ENCODE measurements at regions of chr11 and their contacts with region 1.

Region 1: DNA sequence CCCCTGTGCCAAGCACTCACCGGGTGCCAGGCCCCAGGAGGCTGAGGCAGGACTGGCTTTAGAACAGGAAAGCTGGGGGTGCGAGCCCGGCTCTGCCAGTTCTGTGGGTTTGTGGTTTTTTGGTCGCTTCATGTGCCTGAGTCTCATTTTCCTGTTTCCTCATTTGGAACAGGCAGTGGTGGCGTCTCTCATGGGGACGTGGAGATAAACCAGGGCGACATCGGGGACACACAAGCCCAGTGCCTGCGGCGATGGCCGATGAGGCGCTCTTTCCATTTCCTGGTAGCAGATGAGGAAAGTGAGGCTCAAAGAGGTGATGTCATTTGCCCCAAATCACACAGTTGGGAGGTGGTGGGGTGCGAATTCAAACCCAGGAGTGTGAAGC is 20.8 kb upstream of the CHKA start:
- DNase-seq: no peak
- H3K4me3 ChIP-seq: no peak overlapping the region
- H3K27ac ChIP-seq: no peak overlapping the region
- H3K4me1 ChIP-seq: peaks cover 10% of the 10 kb centered on the region
- H3K27me3 ChIP-seq: no peaks in the 10 kb centered on the region
- CTCF ChIP-seq: no peak

Region 2: DNA sequence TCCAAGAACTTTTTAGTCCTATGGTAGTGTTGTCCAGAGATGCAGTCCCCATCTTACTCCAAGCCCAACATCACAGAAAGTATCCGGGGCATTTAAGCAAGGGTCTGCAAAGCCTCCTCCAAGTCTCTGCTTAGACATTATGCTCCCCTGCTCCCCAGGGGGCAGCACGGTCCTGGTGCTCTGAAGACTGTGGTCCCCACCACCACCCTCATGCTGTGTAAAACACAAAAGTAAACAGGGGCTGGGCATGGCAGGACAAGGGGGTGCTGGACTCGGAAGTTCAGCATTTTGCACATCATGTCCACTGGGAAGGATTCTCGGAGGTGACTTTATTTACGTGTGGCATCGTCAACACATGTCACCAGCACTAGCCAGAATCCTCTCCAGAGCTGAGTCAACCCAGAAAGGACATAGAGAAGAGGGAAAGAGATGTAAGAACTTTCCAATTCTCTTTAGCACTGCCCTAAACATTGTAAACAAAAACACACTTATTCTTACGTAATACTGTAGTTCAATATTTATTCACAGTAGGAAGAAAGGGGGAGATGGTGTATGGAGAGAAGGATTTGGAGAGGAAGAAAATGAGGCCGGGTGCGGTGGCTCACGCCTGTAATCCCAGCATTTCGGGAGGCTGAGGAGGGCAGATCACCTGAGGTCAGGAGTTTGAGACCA is 65.5 kb before region 1 on chr11:
- CTCF ChIA-PET with region 1: no interaction called
- dilution Hi-C with region 1: loop called (anchors 5 kb)
- in situ Hi-C with region 1: no loop called
- intact Hi-C with region 1: no loop called
- DNase-seq: no peak
- H3K4me3 ChIP-seq: no peak overlapping the region
- H3K27ac ChIP-seq: no peak overlapping the region
- H3K4me1 ChIP-seq: peaks cover 12% of the 10 kb centered on the region
- H3K27me3 ChIP-seq: no peaks in the 10 kb centered on the region
- CTCF ChIP-seq: no peak

Region 3: GRCh38 chr11:68235650-68236049 is 93.6 kb after region 1 on chr11:
- CTCF ChIA-PET with region 1: no interaction called
- dilution Hi-C with region 1: loop called (anchors 5 kb)
- in situ Hi-C with region 1: no loop called
- intact Hi-C with region 1: no loop called
- DNase-seq: no peak
- H3K4me3 ChIP-seq: no peak overlapping the region
- H3K27ac ChIP-seq: no peak overlapping the region
- H3K4me1 ChIP-seq: no peaks in the 10 kb centered on the region
- H3K27me3 ChIP-seq: no peaks in the 10 kb centered on the region
- CTCF ChIP-seq: no peak

Measured in mammary epithelial cell (primary cell).